Mammary epithelial cell (primary cell): ENCODE measurements at regions of chr1 and their contacts with region 1.

Region 1: DNA sequence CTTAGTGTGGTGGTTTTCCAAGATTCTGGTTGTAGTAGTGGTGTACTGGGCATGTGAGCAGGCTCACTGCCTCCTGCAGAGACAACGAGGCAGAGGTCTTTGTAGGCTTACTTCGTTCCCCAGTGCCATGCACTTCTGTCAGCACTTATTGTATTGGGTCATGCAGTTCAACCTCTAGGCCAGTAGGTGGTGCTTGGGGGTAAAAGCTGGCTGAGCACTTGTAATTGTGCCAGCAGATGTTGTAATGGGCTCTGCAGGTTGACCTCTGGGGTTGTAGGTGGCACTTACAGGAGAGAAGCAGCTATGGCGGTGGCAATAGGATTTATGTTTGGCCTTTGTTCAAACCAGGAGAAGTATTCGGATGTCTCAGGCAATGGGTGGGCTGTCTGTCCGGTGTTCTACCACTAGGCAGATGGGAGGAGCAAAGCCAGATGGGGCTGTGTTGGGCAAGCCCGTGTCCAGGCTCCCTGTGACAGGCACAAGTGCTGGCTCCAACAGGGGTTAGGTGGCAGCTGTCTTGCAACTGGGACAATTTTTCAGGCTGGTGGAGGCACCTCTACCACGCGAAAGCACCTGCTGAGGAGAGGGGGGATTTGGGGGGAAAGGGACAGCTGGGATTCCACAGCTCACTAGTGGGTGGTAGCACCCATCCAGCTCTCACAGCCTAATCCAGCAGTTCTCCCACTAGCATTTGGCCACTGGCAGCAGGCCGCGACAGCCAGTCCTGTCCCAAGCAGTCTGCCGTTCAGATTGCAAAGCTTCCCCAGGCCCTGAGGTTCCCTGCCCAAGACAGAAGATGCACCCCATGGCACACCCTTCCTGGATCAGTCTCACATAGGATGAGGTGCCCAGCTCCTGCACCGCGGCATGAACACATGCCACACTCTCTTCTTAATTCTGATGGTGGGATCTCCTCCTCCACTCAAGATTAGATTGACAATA is 274.5 kb downstream of the CTH start:
- DNase-seq: peak; percentile 40
- H3K4me3 ChIP-seq: no peak overlapping the region
- H3K27ac ChIP-seq: no peak overlapping the region
- H3K4me1 ChIP-seq: no peaks in the 10 kb centered on the region
- H3K27me3 ChIP-seq: no peaks in the 10 kb centered on the region
- CTCF ChIP-seq: peak; percentile 89 to 95

Region 2: GRCh38 chr1:70896224-70896623 is 210.7 kb after region 1 on chr1:
- CTCF ChIA-PET with region 1: no interaction called
- dilution Hi-C with region 1: no loop called
- in situ Hi-C with region 1: no loop called
- intact Hi-C with region 1: loop called (anchors 1 kb)
- DNase-seq: no peak
- H3K4me3 ChIP-seq: no peak overlapping the region
- H3K27ac ChIP-seq: no peak overlapping the region
- H3K4me1 ChIP-seq: no peaks in the 10 kb centered on the region
- H3K27me3 ChIP-seq: no peaks in the 10 kb centered on the region
- CTCF ChIP-seq: peak in 1 of 2 donors; percentile 48